CD4-positive, alpha-beta T cell (primary cell): ENCODE measurements at regions of chr20 and their contacts with region 1.

Region 1: GRCh38 chr20:49812463-49813304 is at the start of gene SLC9A8:
- DNase-seq: peak; percentile 63 to 96 (median 76)
- ATAC-seq: peak; percentile 86
- H3K4me3 ChIP-seq: peak within 1 kb of the TSS; percentile 96
- H3K4me3 Mint-ChIP-seq: peak within 1 kb of the TSS; percentile 97
- H3K27ac ChIP-seq: peak within 1 kb of the TSS; percentile 89 to 92
- H3K27ac Mint-ChIP-seq: peak within 1 kb of the TSS; percentile 97
- H3K4me1 ChIP-seq: peaks cover 25% of the 10 kb centered on the region
- H3K4me1 Mint-ChIP-seq: peaks cover 38% of the 10 kb centered on the region
- H3K27me3 ChIP-seq: no peaks in the 10 kb centered on the region
- H3K27me3 Mint-ChIP-seq: no peaks in the 10 kb centered on the region
- CTCF ChIP-seq: peak; percentile 28
- total RNA-seq, gene SLC9A8: 29.5 to 30.2 TPM

Region 2: DNA sequence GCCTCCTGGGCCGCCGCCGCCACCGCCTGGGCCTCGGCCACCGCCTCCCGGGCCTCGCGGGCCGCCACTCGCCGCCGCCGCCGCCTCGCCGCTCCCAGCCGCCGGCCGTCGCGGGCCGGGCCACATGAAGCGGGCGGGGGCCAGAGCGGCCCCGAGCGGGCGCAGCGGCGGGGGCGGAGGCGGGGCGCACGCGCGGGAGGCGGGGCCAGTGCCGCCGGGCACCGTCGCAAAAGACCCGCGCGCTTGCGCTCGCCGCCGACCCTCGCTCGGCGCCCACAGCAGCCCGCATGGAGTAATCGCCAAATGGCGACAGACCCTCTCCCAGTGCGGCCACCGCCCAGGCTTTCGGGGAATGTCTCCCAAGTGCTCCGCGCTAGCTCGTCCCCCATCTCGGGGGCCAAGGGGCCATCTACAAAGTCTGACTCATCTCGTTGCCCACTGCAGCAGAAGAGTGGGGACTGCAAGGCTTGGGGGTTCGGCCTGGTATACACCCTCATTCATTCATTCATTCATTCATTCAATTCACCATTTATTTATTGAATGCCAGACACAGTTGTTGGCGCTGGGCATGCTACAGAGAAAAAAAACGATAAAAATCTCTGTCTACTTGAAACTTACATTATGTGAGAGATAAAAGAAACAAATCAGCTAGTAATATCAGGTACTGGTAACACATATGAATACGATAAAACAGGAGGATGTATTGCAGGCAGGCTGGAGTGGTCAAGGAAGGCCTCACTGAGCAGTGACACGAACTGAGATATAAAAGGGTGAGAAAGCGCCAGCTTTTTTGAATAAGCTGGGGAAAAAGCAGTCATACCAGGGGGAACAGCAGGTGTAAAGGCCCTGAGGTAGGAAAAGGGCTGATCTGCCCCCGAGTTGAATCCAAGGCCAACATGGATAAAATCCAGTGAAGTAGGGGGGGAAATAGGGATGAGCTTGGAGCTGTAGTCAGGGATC is 98.7 kb before region 1 on chr20 and contains the start of gene B4GALT5:
- CTCF ChIA-PET with region 1: no interaction called
- POLR2A ChIA-PET with region 1: interaction called, 8 read pairs
- intact Hi-C with region 1: loop called (anchors 5 to 10 kb)
- DNase-seq: peak; percentile 17 to 84 (median 50)
- ATAC-seq: peak; percentile 79
- H3K4me3 ChIP-seq: peak within 1 kb of the TSS; percentile 89
- H3K4me3 Mint-ChIP-seq: peak within 1 kb of the TSS; percentile 93
- H3K27ac ChIP-seq: peak within 1 kb of the TSS in 1 of 2 donors; percentile 40
- H3K27ac Mint-ChIP-seq: peak within 1 kb of the TSS; percentile 63
- H3K4me1 ChIP-seq: peaks cover 17% of the 10 kb centered on the region
- H3K4me1 Mint-ChIP-seq: peaks cover 35% of the 10 kb centered on the region
- H3K27me3 ChIP-seq: no peaks in the 10 kb centered on the region
- H3K27me3 Mint-ChIP-seq: no peaks in the 10 kb centered on the region
- CTCF ChIP-seq: no peak
- total RNA-seq, gene B4GALT5: 3.1 to 3.2 TPM

Region 3: DNA sequence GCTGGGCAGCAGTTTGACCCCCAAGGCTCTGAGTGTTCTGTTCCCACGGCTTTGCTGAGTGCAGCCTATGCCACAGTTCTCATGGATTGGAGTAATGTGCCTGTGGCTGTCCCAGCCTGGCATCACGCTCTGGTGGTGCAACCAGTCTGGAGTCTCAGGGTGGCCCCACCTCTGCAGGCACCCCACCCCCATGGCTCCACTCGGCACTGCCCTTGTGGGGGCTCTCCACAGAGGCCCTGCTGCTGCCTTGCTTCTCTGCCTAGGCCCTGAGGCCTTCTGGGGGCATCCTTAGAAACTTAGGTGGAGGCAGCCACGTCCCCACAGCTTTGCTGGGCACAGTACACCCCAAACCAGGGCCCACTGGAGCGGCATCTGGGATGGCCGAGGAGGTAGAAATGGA is 73.6 kb before region 1 on chr20:
- CTCF ChIA-PET with region 1: no interaction called
- POLR2A ChIA-PET with region 1: no interaction called
- intact Hi-C with region 1: no loop called
- DNase-seq: no peak
- ATAC-seq: no peak
- H3K4me3 ChIP-seq: no peak overlapping the region
- H3K4me3 Mint-ChIP-seq: no peak overlapping the region
- H3K27ac ChIP-seq: no peak overlapping the region
- H3K27ac Mint-ChIP-seq: no peak overlapping the region
- H3K4me1 ChIP-seq: no peaks in the 10 kb centered on the region
- H3K4me1 Mint-ChIP-seq: no peaks in the 10 kb centered on the region
- H3K27me3 ChIP-seq: no peaks in the 10 kb centered on the region
- H3K27me3 Mint-ChIP-seq: no peaks in the 10 kb centered on the region
- CTCF ChIP-seq: no peak

Region 4: GRCh38 chr20:49823152-49823847 is 10.6 kb after region 1 on chr20:
- CTCF ChIA-PET with region 1: interaction called, 5 read pairs
- POLR2A ChIA-PET with region 1: interaction called, 18 read pairs
- intact Hi-C with region 1: no loop called
- DNase-seq: peak in 3 of 14 experiments; percentile 82 to 86 (median 82)
- ATAC-seq: peak; percentile 87
- H3K4me3 ChIP-seq: no peak overlapping the region
- H3K4me3 Mint-ChIP-seq: peak overlapping the region; percentile 42
- H3K27ac ChIP-seq: peak overlapping the region; percentile 50 to 57
- H3K27ac Mint-ChIP-seq: peak overlapping the region; percentile 69
- H3K4me1 ChIP-seq: peaks cover 27% of the 10 kb centered on the region
- H3K4me1 Mint-ChIP-seq: peaks cover 54% of the 10 kb centered on the region
- H3K27me3 ChIP-seq: no peaks in the 10 kb centered on the region
- H3K27me3 Mint-ChIP-seq: no peaks in the 10 kb centered on the region
- CTCF ChIP-seq: no peak

Region 5: GRCh38 chr20:49915378-49916145 is 102.9 kb after region 1 on chr20 and contains the start of gene SPATA2:
- CTCF ChIA-PET with region 1: no interaction called
- POLR2A ChIA-PET with region 1: interaction called, 5 read pairs
- intact Hi-C with region 1: loop called (anchors 2 to 10 kb)
- DNase-seq: peak; percentile 85 to 98 (median 91)
- ATAC-seq: peak; percentile 75
- H3K4me3 ChIP-seq: peak within 1 kb of the TSS; percentile 93
- H3K4me3 Mint-ChIP-seq: peak within 1 kb of the TSS; percentile 98
- H3K27ac ChIP-seq: peak within 1 kb of the TSS; percentile 99 to 100
- H3K27ac Mint-ChIP-seq: peak within 1 kb of the TSS; percentile 99
- H3K4me1 ChIP-seq: peaks cover 33% of the 10 kb centered on the region
- H3K4me1 Mint-ChIP-seq: peaks cover 39% of the 10 kb centered on the region
- H3K27me3 ChIP-seq: no peaks in the 10 kb centered on the region
- H3K27me3 Mint-ChIP-seq: no peaks in the 10 kb centered on the region
- CTCF ChIP-seq: no peak
- total RNA-seq, gene SPATA2: 16.0 to 16.4 TPM

Region 6: DNA sequence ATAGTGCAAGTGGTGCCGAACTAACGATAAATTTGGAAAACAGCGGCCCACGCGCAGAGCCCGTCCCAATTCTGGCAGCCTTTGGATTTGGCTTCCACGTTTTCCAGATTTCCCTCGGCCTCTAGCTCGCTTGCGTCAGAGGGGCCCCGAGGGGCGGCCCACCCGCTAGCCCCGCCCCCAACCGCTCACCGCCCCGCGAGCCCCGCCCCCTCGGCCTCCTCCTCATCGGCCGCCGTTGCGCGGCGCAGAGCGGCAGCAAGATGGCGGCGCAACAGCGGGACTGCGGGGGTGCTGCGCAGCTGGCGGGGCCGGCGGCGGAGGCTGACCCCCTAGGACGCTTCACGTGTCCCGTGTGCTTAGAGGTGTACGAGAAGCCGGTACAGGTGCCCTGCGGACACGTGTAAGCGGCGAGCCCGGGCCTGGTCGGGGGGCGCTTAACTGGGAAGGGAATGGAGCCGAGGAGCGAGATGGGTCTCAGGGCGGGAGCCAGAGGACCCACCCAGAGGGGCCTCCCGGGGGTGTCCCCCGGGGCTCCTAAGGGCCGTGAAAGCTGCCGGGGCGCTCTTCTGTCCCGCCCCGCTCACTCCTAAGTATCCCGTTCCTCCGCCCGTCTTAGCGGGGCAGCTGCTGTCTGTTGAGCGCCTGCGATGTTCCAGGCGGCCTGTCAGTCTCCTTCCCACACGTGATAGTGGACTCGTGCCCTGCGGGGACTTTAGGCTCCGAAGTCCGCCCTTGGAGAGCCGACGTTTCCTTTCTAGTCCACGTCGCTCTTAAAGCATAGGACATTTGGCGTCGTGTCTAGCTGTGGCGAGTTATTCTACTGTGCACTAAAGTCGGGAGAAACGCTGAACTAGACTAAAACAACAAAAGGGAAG is 123.7 kb after region 1 on chr20 and contains the start of gene RNF114:
- CTCF ChIA-PET with region 1: no interaction called
- POLR2A ChIA-PET with region 1: interaction called, 14 read pairs
- intact Hi-C with region 1: no loop called
- DNase-seq: peak; percentile 84 to 97 (median 90)
- ATAC-seq: peak; percentile 96
- H3K4me3 ChIP-seq: peak within 1 kb of the TSS; percentile 97
- H3K4me3 Mint-ChIP-seq: peak within 1 kb of the TSS; percentile 93
- H3K27ac ChIP-seq: peak within 1 kb of the TSS; percentile 81 to 82
- H3K27ac Mint-ChIP-seq: peak within 1 kb of the TSS; percentile 90
- H3K4me1 ChIP-seq: peaks cover 42% of the 10 kb centered on the region
- H3K4me1 Mint-ChIP-seq: peaks cover 51% of the 10 kb centered on the region
- H3K27me3 ChIP-seq: no peaks in the 10 kb centered on the region
- H3K27me3 Mint-ChIP-seq: no peaks in the 10 kb centered on the region
- CTCF ChIP-seq: no peak
- total RNA-seq, gene RNF114: 129 to 132 TPM

Region 7: DNA sequence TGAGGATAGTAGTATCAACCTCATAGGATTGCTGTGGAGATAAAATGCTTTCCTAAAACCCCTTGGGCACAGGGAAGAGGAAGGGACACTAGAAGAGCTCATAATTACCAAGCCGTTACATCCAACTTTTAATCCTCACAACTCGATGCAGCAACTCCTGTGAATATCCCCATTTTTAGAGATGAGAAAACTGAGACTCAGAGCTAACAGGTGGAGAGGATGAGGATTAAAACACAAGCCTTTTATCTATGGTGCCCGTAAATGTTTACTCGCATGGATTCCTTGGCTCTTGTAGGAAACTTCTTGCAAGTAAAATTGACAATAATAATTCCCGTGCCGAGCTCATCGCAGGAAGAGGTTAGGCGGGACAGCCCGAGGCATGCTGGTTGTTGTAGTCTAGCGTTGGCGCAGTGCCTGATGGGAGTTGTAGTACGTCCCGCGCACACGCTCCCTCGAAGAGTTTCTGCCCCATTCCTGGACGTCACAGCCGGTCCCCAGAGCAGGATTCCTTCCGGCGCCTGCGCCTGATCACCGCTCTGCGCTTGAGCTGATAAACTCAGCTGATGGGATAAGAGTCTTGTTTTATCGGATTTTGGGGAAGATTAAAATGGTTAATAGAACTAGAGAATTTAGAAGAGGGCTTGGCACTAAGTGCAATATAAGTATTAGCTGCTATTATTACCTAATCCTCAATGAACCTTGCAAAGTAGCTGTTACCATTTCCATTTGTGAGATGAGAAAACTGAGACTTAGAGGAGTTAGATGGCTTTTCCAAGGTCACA is 303.1 kb after region 1 on chr20:
- CTCF ChIA-PET with region 1: no interaction called
- POLR2A ChIA-PET with region 1: interaction called, 4 read pairs
- intact Hi-C with region 1: loop called in 1 of 2 experiments (anchors 10 kb)
- DNase-seq: peak; percentile 82 to 97 (median 88)
- ATAC-seq: peak; percentile 83
- H3K4me3 ChIP-seq: peak overlapping the region; percentile 58
- H3K4me3 Mint-ChIP-seq: peak overlapping the region; percentile 92
- H3K27ac ChIP-seq: no peak overlapping the region
- H3K27ac Mint-ChIP-seq: peak overlapping the region; percentile 85
- H3K4me1 ChIP-seq: peaks cover 53% of the 10 kb centered on the region
- H3K4me1 Mint-ChIP-seq: peaks cover 53% of the 10 kb centered on the region
- H3K27me3 ChIP-seq: no peaks in the 10 kb centered on the region
- H3K27me3 Mint-ChIP-seq: no peaks in the 10 kb centered on the region
- CTCF ChIP-seq: no peak